ENCODE measurements at regions of chr18 and their contacts with region 1.

Region 1: DNA sequence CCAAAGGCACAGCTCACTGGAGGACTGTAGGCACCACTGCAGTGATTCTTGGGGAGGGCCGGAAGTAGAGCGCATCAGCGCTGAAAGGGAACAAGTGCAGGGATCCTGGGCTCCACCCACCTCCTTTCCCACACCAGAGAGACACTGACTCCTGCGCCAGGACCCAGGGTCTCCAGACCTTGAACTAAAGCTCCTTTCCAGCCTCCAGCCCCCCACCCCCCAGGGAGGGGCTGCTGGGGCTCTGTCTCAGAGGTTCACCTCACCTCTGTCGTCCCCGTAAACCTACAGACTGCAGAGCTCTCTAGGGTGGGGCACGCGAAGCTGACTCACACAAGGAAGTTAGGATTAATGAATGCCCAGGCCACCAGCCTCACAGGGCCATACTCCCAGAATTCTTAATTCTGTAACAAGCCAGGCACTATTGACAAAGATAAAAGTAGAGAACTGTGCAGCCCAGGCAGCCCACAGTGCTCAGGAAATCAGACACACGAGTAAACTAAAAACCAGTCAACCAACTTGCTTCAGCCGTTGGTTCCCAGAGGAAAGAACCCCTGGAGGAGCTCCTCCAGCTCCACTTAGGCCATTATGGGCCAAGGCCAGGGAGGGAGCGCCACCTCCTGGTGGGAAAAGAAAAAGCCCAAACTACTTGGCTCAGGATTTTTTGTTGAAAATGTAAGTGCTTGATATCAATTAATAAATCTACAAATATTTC is 45.1 kb upstream of the ACAA2 start:
- DNase-seq: no peak
- H3K4me3 ChIP-seq: no peak overlapping the region
- CTCF ChIP-seq: peak; percentile 81

Region 2: GRCh38 chr18:49510393-49511115 is 347.9 kb before region 1 on chr18:
- CTCF ChIA-PET with region 1: interaction called, 349 read pairs
- POLR2A ChIA-PET with region 1: no interaction called
- DNase-seq: no peak
- H3K4me3 ChIP-seq: no peak overlapping the region
- CTCF ChIP-seq: peak; percentile 86

Region 3: GRCh38 chr18:49561289-49562193 is 296.9 kb before region 1 on chr18 and contains the start of gene LIPG:
- CTCF ChIA-PET with region 1: interaction called, 241 read pairs
- POLR2A ChIA-PET with region 1: no interaction called
- DNase-seq: no peak
- H3K4me3 ChIP-seq: peak within 1 kb of the TSS; percentile 46
- CTCF ChIP-seq: no peak

Region 4: GRCh38 chr18:49784427-49785185 is 73.9 kb before region 1 on chr18:
- CTCF ChIA-PET with region 1: interaction called, 66 read pairs
- POLR2A ChIA-PET with region 1: no interaction called
- DNase-seq: no peak
- H3K4me3 ChIP-seq: no peak overlapping the region
- CTCF ChIP-seq: no peak

Region 5: GRCh38 chr18:49839012-49839411 is 19.5 kb before region 1 on chr18:
- CTCF ChIA-PET with region 1: interaction called, 19 read pairs
- POLR2A ChIA-PET with region 1: no interaction called
- DNase-seq: no peak
- H3K4me3 ChIP-seq: no peak overlapping the region
- CTCF ChIP-seq: no peak

Measured in AG04449 (cell line).